ENCODE measurements at regions of chr3 and their contacts with region 1.

Region 1: DNA sequence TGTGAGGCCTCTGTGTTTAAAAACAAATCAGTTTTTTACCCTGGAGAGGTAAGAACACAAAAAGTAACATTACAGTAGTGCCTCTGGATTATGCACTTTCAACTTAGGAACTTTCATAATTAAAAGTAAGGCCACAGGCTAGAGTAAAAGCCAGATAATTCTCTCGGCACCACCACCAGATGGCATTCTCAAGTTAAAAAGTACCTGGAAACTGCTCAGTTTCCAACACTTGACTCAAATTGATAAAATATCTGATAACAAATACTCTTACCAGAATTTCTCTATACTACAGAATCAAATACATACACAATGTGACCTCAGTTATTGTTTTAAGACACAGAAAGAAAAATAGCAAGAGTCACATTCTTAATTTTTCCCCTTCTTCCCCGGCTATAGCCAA is 19.9 kb downstream of the SPICE1 start:
- DNase-seq: peak in 1 of 6 donors; percentile 18
- ATAC-seq: peak; percentile 80 to 93 (median 88)
- H3K4me3 ChIP-seq: no peak overlapping the region
- H3K27ac ChIP-seq: no peak overlapping the region
- H3K4me1 ChIP-seq: no peaks in the 10 kb centered on the region
- H3K27me3 ChIP-seq: no peaks in the 10 kb centered on the region
- CTCF ChIP-seq: peak in 2 of 4 donors; percentile 31 to 43

Region 2: DNA sequence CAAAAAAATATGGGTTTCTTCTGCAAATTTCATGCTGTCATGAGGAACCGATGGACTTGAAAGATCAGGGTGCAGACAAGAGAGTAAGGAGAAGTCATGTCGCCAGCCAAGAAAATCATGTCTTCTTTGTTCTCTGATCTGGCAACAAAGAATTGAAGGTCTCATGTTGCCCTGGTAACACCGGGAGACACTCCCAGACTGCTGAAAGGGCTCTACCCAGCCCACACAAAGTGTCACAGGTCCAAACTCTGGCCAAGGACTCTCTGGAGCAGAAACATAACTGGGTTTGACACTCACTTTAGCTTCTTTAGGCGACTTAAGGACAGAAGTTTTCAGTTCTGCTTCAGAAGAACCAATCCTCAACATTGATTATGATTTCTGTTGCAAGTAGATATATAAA is 80.2 kb after region 1 on chr3:
- intact Hi-C with region 1: loop called in 1 of 3 experiments (anchors 10 kb)
- DNase-seq: no peak
- ATAC-seq: no peak
- H3K4me3 ChIP-seq: no peak overlapping the region
- H3K27ac ChIP-seq: no peak overlapping the region
- H3K4me1 ChIP-seq: no peaks in the 10 kb centered on the region
- H3K27me3 ChIP-seq: no peaks in the 10 kb centered on the region
- CTCF ChIP-seq: no peak

Region 3: DNA sequence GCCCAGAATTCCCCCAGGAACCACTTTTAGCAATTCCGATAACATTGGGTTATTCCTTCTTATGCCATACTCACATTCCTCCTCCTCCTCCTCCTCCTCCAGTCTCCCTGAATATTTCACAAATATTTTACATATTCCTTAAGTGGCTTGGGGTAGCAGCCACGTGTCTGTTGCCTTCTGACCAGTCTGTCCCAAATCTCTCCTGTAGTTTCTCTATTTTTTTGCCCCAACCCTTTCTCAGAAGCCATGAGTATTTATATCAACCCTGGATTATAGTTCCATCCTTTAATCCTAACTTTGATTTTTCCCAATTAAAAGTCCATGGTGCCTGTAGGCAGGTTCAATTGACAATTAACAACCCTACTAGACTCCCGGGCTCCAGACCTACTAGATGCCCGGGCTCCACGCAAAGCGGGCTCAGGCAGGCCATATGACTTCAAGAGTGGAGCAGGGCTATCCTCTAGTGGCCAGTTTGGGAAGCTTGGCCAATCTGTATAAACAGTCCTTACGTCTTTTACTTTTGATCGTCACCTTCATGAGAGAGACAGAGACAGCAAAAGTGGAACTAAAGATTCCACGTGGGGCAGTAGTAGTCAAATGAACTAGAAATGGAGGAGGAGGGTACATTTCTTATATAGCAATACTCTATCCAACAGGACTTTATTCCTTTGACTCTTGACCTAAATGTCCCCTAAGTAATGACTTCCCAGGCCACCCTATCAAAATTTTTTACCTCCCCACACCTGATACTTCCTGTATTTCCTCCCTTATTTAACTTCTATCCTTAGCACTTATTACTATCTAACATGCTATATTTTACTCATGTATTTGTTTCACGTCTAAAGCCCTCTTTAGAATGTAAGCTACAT is 131.7 kb after region 1 on chr3:
- intact Hi-C with region 1: loop called in 2 of 3 experiments (anchors 5 to 10 kb)
- DNase-seq: peak in 3 of 6 donors; percentile 32 to 49 (median 42)
- ATAC-seq: peak; percentile 82 to 97 (median 96)
- H3K4me3 ChIP-seq: peak overlapping the region in 1 of 4 donors; percentile 1
- H3K27ac ChIP-seq: no peak overlapping the region
- H3K4me1 ChIP-seq: no peaks in the 10 kb centered on the region
- H3K27me3 ChIP-seq: no peaks in the 10 kb centered on the region
- CTCF ChIP-seq: peak; percentile 43 to 82 (median 76)

Region 4: DNA sequence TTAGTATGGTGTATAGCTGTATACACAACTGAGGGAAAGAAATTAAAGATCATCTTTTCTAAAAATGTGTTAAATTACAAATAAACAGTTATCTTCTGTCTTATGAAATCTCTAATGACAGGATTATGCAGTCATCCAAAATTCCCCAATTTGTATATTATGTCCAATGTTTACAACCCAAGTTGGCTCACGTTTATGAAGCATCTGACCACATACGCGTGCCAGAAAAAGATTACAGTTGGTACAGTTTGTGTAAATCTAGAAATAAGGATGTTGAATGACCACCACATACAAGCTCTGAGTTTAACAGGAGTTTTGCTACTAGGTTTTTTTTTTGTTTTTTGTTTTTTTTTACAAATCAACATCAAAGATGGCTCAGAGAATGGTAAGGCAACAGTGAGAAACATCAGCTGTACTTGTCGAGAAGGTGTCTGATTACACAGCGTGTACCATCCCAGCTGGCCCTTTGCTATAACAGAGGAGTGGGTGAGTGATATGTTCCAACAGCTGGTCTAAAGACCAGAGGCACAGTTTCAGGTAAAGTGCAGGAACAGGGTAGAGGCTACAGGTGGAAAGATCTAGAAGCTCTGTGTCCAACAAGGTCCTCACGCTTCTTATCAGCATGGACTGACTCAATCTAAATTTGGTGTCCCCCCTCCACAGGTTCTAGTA is 154.3 kb after region 1 on chr3:
- intact Hi-C with region 1: no loop called
- DNase-seq: no peak
- ATAC-seq: no peak
- H3K4me3 ChIP-seq: no peak overlapping the region
- H3K27ac ChIP-seq: no peak overlapping the region
- H3K4me1 ChIP-seq: no peaks in the 10 kb centered on the region
- H3K27me3 ChIP-seq: no peaks in the 10 kb centered on the region
- CTCF ChIP-seq: no peak

Measured in pancreas (tissue), 10 donors.